Right ventricle myocardium inferior (tissue), 1 donor: ENCODE measurements at regions of chr15 and their contacts with region 1.

Region 1: DNA sequence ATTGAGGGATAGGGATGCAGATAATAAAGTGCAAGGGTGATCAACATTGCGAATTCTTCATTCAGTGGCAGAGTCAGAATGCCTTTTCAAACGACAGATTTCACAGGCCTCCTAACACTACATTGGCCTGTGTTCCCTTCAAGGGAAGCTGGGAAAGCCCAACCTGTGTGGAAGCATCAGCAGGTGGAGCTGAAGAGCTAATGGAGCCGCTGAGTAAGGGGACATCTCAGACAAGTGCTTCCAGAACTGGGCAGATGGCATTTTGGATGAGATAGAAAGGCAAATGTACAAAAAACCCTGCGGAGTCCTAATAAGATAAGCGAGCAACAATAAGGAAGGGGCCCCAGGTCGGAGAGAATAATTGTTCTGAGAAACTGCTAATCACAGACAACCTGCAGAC is 8.5 kb upstream of the SLC24A5 start:
- DNase-seq: no peak
- ATAC-seq: peak; percentile 42

Region 2: GRCh38 chr15:48250640-48251076 is 138.4 kb after region 1 on chr15:
- intact Hi-C with region 1: loop called (anchors 5 kb)
- DNase-seq: no peak
- ATAC-seq: no peak